ENCODE measurements at regions of chr7 and their contacts with region 1.

Region 1: GRCh38 chr7:148914208-148914777 is 30.2 kb upstream of the EZH2 start:
- DNase-seq: peak; percentile 81
- H3K4me3 Mint-ChIP-seq: peak overlapping the region; percentile 84
- H3K27ac Mint-ChIP-seq: peak overlapping the region; percentile 98
- H3K4me1 Mint-ChIP-seq: peaks cover 62% of the 10 kb centered on the region
- H3K27me3 Mint-ChIP-seq: peaks cover 1% of the 10 kb centered on the region

Region 2: GRCh38 chr7:148503875-148504487 is 410.3 kb before region 1 on chr7:
- intact Hi-C with region 1: loop called (anchors 1 kb)
- DNase-seq: peak; percentile 64
- H3K4me3 Mint-ChIP-seq: no peak overlapping the region
- H3K27ac Mint-ChIP-seq: no peak overlapping the region
- H3K4me1 Mint-ChIP-seq: peaks cover 8% of the 10 kb centered on the region
- H3K27me3 Mint-ChIP-seq: peaks cover 21% of the 10 kb centered on the region

Region 3: DNA sequence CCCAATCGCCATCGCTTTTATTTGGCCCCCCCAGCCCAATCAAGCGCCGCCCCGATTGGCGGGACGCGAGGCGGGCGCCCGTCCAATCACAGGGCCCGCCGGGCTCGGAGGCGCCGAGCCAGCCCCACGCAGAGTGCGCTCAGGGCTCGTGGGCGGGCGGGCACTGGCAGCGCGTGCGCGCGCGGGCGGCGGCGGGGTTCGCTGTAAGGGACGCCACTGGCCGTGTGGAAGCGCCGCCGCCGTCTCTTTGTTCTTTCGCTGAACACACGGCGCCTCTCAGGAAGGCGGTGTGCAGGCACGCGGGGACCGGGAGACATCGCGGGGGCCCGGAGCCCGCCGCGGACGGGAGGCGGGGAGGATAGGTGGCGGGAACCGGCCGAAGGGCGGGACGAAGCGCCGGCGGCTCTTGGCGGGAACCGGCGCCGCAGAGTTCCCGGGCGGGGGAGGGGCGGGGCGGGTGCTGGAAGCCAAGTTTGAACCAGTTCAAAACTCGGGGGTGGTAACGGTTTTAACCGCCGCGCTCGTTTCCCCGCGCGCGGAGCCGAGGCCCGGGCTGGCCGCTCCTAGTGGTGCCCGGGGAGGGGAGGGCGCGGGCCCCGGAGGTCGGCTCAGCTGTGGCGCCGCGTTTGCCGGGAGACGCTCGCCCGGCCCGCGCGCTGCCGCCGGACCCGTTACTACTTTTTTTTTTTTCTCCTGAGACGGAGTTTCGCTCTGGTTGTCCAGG is 29.8 kb before region 1 on chr7:
- intact Hi-C with region 1: loop called (anchors 1 kb)
- DNase-seq: peak; percentile 99
- H3K4me3 Mint-ChIP-seq: peak overlapping the region; percentile 93
- H3K27ac Mint-ChIP-seq: peak overlapping the region; percentile 99
- H3K4me1 Mint-ChIP-seq: peaks cover 26% of the 10 kb centered on the region
- H3K27me3 Mint-ChIP-seq: no peaks in the 10 kb centered on the region

Region 4: DNA sequence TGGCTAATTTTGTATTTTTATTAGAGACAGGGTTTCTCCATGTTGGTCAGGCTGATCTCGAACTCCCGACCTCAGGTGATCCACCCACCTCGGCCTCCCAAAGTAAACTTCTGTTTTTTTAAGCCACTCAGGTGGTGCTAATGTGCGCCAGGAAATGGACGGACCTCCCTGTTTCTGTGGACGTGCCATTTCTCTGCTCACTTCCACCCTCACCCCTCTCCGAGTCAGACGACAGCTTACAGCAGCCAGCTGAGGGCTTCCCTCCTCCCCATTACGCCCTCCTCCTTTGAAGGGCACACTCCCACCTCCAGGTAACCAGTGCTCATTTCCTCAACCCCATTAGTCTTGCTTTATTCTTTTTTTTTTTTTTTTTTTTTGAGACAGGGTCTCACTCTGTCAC is 11.5 kb after region 1 on chr7:
- intact Hi-C with region 1: loop called (anchors 1 kb)
- DNase-seq: no peak
- H3K4me3 Mint-ChIP-seq: no peak overlapping the region
- H3K27ac Mint-ChIP-seq: no peak overlapping the region
- H3K4me1 Mint-ChIP-seq: peaks cover 46% of the 10 kb centered on the region
- H3K27me3 Mint-ChIP-seq: no peaks in the 10 kb centered on the region

Region 5: GRCh38 chr7:148962823-148963582 is 48.7 kb after region 1 on chr7:
- intact Hi-C with region 1: loop called (anchors 1 kb)
- DNase-seq: peak; percentile 89
- H3K4me3 Mint-ChIP-seq: peak overlapping the region; percentile 96
- H3K27ac Mint-ChIP-seq: peak overlapping the region; percentile 89
- H3K4me1 Mint-ChIP-seq: peaks cover 24% of the 10 kb centered on the region
- H3K27me3 Mint-ChIP-seq: no peaks in the 10 kb centered on the region

Region 6: GRCh38 chr7:149239345-149240191 is 325.3 kb after region 1 on chr7 and contains the start of gene ZNF212:
- intact Hi-C with region 1: loop called (anchors 10 kb)
- DNase-seq: peak; percentile 96
- H3K4me3 Mint-ChIP-seq: peak within 1 kb of the TSS; percentile 93
- H3K27ac Mint-ChIP-seq: peak within 1 kb of the TSS; percentile 90
- H3K4me1 Mint-ChIP-seq: peaks cover 26% of the 10 kb centered on the region
- H3K27me3 Mint-ChIP-seq: peaks cover 3% of the 10 kb centered on the region
- total RNA-seq, gene ZNF212: 18.0 and 18.7 TPM in 2 replicates

Measured in activated CD4-positive, alpha-beta T cell treated with anti-CD3 and anti-CD28 coated beads, Interleukin-2, amount 10 ng/mL, durations not matched to agents 24 days and 14 days (primary cell).